Left colon (tissue), 2 donors: ENCODE measurements at regions of chr9 and their contacts with region 1.

Region 1: DNA sequence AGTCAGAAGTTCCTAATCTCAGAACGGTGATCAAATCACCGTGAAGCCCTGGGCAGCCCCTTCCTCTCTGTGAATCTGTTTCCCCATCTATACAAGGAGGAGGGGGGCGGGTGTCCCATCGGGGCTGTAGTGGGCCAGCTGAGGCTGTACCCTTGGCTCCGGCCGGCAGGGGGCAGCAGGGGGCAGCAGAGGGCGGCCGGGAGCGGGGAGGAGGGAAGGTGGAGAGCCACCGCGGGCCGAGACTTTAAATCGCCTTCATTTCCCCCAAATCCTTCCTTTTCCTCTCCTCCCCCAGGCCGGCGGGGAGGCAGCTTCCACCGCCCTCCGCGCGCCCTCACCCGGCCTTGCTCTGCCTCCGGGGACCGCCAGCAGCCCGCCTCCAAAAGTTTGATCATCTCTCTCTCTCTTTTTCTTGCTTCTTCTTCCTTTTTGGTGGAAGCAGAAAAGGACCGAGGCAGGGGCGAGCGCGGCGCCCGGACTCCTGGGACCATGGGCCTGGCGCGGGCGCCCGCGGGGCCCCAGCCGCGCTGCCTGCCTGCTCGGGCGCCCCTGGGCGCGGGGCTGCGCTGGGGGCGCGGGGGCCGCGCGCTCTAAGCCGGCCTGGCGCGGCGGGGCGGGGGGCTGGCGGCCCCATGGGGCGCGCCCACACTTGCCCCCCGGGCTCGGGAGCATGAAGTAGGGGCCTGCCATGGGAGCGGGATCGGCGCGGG is at the start of gene COL27A1:
- DNase-seq: peak; percentile 64 to 84
- ATAC-seq: peak; percentile 92
- total RNA-seq, gene COL27A1: 2.7 to 3.7 TPM

Region 2: GRCh38 chr9:114250235-114250568 is 94.8 kb after region 1 on chr9:
- intact Hi-C with region 1: no loop called
- DNase-seq: peak; percentile 52 to 58
- ATAC-seq: no peak

Region 3: GRCh38 chr9:114271641-114272081 is 116.2 kb after region 1 on chr9:
- intact Hi-C with region 1: loop called in 1 of 2 experiments (anchors 10 kb)
- DNase-seq: peak in 1 of 2 donors; percentile 34
- ATAC-seq: peak; percentile 38

Region 4: DNA sequence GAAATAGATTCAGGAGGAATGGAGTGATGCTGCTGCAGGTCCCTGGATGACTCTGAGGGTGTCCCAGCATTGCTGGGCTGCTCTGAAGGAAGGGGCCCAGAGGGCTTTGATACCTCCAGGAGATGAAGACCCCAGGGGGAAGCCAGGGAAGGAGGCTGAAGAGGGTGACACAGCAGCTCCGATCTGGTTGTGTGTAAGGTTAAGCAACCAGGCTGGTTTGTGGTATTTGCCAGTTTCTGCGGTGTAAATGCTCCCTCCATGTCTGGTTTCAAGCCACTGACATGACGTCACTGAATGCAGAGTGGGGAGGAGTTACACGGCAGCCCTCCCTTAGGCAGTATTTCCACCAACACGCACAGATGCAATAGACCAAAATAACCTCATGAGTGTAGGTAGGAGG is 127.5 kb after region 1 on chr9:
- intact Hi-C with region 1: loop called (anchors 10 kb)
- DNase-seq: peak; percentile 0 to 5
- ATAC-seq: no peak